Posterior vena cava (tissue), 2 donors: ENCODE measurements at regions of chr1 and their contacts with region 1.

Region 1: DNA sequence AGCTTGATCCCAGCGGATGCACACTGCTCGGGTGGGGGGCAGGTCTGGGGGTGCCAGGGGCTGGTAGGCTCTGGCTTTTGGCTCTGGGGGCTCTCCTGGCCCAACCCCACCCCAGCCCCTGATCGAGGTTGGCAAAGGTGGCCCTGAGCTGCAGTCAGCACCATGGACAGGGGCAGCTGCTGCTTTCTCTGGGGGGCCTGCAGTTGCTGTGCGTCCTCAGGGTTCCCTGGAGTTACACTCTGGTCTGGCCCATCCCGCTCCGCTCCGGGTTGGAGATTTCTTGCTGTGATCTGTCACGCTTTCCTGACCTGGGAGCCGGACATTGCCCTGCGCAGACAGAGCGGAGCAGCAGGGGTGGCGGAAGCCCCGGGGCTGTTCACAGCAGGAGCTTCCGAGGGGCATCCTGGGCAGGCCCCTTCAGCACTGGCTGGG is 8.0 kb upstream of the PLCH2 start:
- DNase-seq: no peak

Region 2: DNA sequence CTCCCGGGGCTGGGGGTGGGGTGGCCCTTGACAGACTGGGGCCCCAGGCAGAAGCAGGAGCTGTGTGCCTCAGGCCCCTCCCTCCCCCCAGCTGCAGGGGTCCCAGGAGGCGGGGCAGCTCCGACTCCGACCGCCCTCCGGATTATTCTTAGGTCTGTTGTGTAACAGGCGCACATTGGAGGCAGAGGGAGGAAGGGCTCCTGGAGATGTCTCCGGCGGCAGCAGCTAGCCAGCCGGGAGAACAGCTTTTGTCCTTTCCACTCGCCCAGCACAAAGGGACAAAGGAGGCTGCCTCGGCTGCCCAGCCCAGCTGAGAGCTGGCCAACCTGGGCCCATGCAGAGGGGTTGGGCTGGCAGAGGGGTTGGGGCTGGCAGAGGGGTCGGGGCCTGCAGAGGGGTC is 21.7 kb before region 1 on chr1:
- intact Hi-C with region 1: loop called in 1 of 2 experiments (anchors 1 kb)
- DNase-seq: no peak

Region 3: DNA sequence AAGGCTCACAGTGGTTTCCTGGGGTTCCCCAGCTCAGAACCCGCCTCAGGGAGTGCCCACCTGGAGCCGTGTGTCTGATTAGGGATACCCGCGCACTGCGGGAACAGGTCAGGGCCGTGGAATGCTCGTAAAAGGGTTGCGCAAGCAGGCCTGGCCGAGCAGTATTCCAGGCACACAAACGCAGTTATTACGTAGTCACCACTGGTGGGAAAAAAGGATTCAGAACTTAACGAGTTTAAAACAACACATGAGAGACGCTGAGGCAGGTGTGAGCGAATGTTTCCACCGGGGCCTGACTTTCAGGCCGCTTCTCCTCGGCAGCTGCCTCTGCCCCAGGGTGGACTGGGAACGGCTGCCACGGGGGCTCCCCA is 26.3 kb after region 1 on chr1:
- intact Hi-C with region 1: no loop called
- DNase-seq: no peak